Activated CD4-positive, alpha-beta T cell treated with anti-CD3 and anti-CD28 coated beads, Interleukin-2, amount 10 ng/mL, durations not matched to agents 24 days and 14 days (primary cell): ENCODE measurements at regions of chr4 and their contacts with region 1.

Region 1: GRCh38 chr4:153438916-153439756 is 27.0 kb upstream of the TMEM131L start:
- DNase-seq: peak; percentile 76
- H3K4me3 Mint-ChIP-seq: peak overlapping the region; percentile 80
- H3K27ac Mint-ChIP-seq: peak overlapping the region; percentile 75
- H3K4me1 Mint-ChIP-seq: peaks cover 27% of the 10 kb centered on the region
- H3K27me3 Mint-ChIP-seq: peaks cover 3% of the 10 kb centered on the region

Region 2: DNA sequence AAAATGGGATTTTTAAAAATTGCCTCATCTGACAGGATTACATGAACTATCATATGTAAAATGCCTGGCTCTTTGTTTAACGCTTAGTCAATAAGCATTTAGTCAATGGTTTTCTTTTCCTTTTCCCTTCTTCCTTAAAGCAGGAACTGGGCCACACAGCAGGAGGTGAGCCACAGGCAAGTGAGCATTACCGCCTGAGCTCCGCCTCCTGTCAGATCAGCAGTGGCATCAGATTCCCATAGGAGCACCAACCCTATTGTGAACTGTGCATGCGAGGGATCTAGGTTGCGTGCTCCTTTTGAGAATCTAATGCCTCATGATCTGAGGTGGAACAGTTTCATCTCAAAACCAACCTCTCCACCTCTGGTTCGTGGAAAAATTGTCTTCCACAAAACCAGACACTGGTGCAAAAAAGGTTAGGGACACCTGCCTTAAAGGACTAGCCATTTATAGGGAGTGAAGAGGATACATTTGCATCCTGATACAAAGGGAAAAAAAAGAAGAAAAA is 1209.3 kb before region 1 on chr4:
- intact Hi-C with region 1: no loop called
- DNase-seq: no peak
- H3K4me3 Mint-ChIP-seq: no peak overlapping the region
- H3K27ac Mint-ChIP-seq: no peak overlapping the region
- H3K4me1 Mint-ChIP-seq: no peaks in the 10 kb centered on the region
- H3K27me3 Mint-ChIP-seq: no peaks in the 10 kb centered on the region

Region 3: DNA sequence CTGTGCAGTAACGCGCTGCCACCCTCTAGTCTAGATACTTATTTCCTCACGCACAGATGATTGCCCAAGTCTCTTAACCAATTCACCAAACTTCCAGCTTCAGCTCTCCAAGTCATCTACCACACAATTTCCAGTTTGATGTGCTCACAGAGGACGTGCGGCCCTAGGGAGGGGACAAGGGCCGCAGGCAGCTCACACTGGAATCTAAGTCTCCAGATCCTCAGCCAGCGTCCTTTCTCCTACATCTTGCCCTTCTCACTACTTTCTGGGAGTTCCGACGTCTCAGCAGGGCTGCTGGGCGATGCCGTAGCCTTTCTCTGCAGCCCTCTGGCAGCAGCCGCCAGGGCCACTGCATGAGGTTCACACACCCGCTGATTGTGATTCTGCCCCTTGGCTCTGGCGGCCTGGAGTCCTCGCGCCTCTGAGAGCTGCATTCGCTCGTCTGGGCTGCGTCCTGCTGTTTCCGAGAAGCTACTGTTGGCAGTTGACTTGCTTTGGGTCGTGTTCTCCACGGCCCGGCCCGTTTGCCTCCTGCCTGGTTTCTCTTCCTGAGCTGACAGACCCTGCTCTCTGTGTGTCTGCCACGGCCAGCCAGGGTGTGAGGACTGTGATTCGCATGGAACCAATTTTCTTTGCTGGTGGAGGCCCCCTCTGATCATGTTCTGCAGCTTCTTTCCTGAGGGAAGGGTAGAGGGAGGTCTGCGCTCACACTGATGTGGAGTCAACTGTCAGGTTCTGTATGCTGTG is 12.9 kb after region 1 on chr4:
- intact Hi-C with region 1: loop called (anchors 1 kb)
- DNase-seq: no peak
- H3K4me3 Mint-ChIP-seq: no peak overlapping the region
- H3K27ac Mint-ChIP-seq: peak overlapping the region; percentile 35
- H3K4me1 Mint-ChIP-seq: peaks cover 15% of the 10 kb centered on the region
- H3K27me3 Mint-ChIP-seq: no peaks in the 10 kb centered on the region